AG04449 (cell line): ENCODE measurements at regions of chr9 and their contacts with region 1.

Region 1: GRCh38 chr9:112041536-112042243 is 133.4 kb downstream of the SUSD1 start:
- DNase-seq: peak; percentile 100
- H3K4me3 ChIP-seq: no peak overlapping the region
- CTCF ChIP-seq: no peak

Region 2: DNA sequence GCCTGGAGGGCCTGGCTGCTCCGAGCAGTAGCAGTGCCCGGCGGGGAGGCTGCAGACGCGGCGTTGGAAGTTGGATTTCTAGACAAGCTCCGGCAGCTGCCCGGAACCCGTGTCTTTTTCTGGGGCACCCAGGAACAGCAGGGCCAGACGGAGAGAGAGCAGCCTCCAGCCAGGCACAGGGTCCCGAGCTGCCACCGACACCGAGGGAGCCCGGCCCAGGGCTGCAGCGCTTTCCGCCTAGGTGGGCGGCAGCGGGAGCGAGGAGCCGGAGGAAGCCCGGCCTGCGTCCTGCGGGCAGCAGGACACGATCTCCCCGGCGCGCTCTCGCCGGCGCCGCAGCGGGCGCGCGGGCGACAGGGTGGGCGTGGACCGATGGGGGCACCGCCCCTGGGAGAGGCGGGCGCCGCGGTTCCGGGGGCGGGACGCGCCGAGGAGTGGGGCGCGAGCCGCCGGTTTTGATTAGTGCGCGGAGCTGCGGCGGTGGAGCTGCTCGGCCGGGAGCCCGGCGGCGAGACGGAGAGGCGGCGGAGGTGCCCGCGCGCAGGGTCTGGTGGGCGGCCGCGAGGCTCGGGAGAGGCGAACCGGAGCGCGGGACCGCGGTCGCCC is 145.2 kb before region 1 on chr9 and contains the start of gene UGCG:
- CTCF ChIA-PET with region 1: no interaction called
- POLR2A ChIA-PET with region 1: interaction called, 12 read pairs
- DNase-seq: no peak
- H3K4me3 ChIP-seq: peak within 1 kb of the TSS; percentile 81
- CTCF ChIP-seq: no peak

Region 3: GRCh38 chr9:111957856-111958652 is 83.6 kb before region 1 on chr9:
- CTCF ChIA-PET with region 1: no interaction called
- POLR2A ChIA-PET with region 1: interaction called, 17 read pairs
- DNase-seq: peak; percentile 99
- H3K4me3 ChIP-seq: peak overlapping the region; percentile 47
- CTCF ChIP-seq: no peak

Region 4: GRCh38 chr9:112028280-112029221 is 13.1 kb before region 1 on chr9:
- CTCF ChIA-PET with region 1: no interaction called
- POLR2A ChIA-PET with region 1: interaction called, 12 read pairs
- DNase-seq: no peak
- H3K4me3 ChIP-seq: no peak overlapping the region
- CTCF ChIP-seq: no peak

Region 5: GRCh38 chr9:112061152-112061740 is 19.6 kb after region 1 on chr9:
- CTCF ChIA-PET with region 1: interaction called, 3 read pairs
- POLR2A ChIA-PET with region 1: interaction called, 10 read pairs
- DNase-seq: peak; percentile 91
- H3K4me3 ChIP-seq: no peak overlapping the region
- CTCF ChIP-seq: no peak